Activated T-helper 2 cell treated with anti-CD3 and anti-CD28 coated beads, Interferon-gamma antibody, Interleukin-2, Interleukin-4, amounts not matched to agents 10 μg/mL and 5 μg/mL and 100 μg/mL, durations not matched to agents 14 hours and 24 hours and 36 hours (primary cell): ENCODE measurements at regions of chr14 and their contacts with region 1.

Region 1: GRCh38 chr14:56810147-56810719 is at the start of gene OTX2:
- DNase-seq: no peak
- H3K4me3 Mint-ChIP-seq: no peak within 1 kb of the TSS
- H3K27ac Mint-ChIP-seq: peak within 1 kb of the TSS; percentile 9
- H3K4me1 Mint-ChIP-seq: peaks cover 8% of the 10 kb centered on the region
- H3K27me3 Mint-ChIP-seq: peaks cover 81% of the 10 kb centered on the region
- total RNA-seq, gene OTX2: not detected in 2 replicates

Region 2: GRCh38 chr14:56794557-56795283 is 15.5 kb before region 1 on chr14:
- intact Hi-C with region 1: loop called (anchors 2 kb)
- DNase-seq: no peak
- H3K4me3 Mint-ChIP-seq: no peak overlapping the region
- H3K27ac Mint-ChIP-seq: no peak overlapping the region
- H3K4me1 Mint-ChIP-seq: peaks cover 5% of the 10 kb centered on the region
- H3K27me3 Mint-ChIP-seq: peaks cover 59% of the 10 kb centered on the region